Cardiac septum (tissue), 1 donor: ENCODE measurements at regions of chr19 and their contacts with region 1.

Region 1: DNA sequence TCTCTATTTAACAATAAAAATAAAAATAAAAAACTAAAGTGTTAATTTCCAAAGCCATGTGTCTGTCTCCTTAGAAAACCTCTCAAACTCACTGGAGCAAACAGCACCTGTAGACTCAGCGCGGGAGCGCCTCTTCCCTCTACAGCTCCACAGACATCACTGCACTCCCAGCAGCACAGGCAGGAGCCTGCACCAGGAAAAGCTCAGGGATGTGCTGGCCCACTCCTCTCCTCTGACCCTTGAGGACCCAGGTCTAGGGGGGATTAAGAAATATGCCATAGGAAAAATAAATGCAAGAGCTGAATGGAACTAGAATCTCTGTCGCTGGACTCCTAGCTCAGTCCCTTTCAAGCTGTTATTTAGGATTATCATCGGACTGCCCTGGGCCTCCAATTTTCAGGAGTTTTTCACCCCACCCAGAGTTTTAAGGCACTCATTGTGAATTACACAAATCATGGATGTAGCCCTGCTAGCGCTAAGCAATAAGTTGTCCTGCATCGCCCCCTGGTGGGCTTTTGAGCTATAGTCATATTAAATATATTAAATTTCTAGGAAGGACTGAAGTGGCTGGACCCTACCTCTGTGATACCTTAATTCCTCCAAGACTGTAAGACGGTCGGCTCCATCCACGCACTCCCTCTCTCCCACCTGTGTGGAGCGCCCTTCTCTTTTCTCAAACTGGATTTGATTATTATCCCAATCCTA is 333.9 kb downstream of the UQCRFS1 start:
- DNase-seq: no peak

Region 2: GRCh38 chr19:28466107-28467045 is 412.6 kb before region 1 on chr19:
- intact Hi-C with region 1: loop called (anchors 10 kb)
- DNase-seq: no peak

Region 3: GRCh38 chr19:28737021-28737895 is 141.8 kb before region 1 on chr19:
- intact Hi-C with region 1: loop called (anchors 2 kb)
- DNase-seq: no peak

Region 4: GRCh38 chr19:28864577-28865042 is 14.4 kb before region 1 on chr19:
- intact Hi-C with region 1: loop called (anchors 2 kb)
- DNase-seq: no peak

Region 5: GRCh38 chr19:28966803-28967328 is 87.9 kb after region 1 on chr19:
- intact Hi-C with region 1: loop called (anchors 2 kb)
- DNase-seq: no peak